Naive thymus-derived CD4-positive, alpha-beta T cell (primary cell): ENCODE measurements at regions of chr4 and their contacts with region 1.

Region 1: DNA sequence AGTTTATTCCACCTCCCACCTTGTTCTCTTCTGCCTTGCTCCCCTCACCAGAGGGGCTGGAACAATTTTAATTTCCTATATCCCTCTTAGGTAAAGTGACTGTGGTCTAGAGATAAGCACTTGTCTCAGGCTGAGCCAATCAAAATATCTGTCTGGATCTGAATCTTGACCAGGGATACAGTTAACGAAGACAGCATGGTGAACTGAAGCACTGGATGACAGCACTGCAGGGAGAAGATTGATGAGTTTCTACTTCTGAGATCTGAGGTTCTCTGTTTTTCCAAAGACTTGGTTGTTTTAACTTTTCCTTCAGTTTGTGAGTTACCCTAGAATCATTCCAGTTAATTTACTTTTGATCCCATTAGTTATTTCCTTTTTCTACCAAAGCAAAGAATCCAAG is 13.2 kb downstream of the GNPDA2 start:
- DNase-seq: no peak
- ATAC-seq: no peak
- H3K4me3 ChIP-seq: no peak overlapping the region
- H3K4me3 Mint-ChIP-seq: no peak overlapping the region
- H3K27ac ChIP-seq: no peak overlapping the region
- H3K27ac Mint-ChIP-seq: peak overlapping the region in 1 of 9 donors; percentile 59
- H3K4me1 ChIP-seq: no peaks in the 10 kb centered on the region
- H3K4me1 Mint-ChIP-seq: peaks cover 0 to 36% (median 5%) of the 10 kb centered on the region in 7 donors
- H3K27me3 ChIP-seq: no peaks in the 10 kb centered on the region
- H3K27me3 Mint-ChIP-seq: no peaks in the 10 kb centered on the region

Region 2: GRCh38 chr4:44532851-44533250 is 180.3 kb before region 1 on chr4:
- CTCF ChIA-PET with region 1: no interaction called
- POLR2A ChIA-PET with region 1: no interaction called
- intact Hi-C with region 1: no loop called
- DNase-seq: no peak
- ATAC-seq: no peak
- H3K4me3 ChIP-seq: no peak overlapping the region
- H3K4me3 Mint-ChIP-seq: no peak overlapping the region
- H3K27ac ChIP-seq: no peak overlapping the region
- H3K27ac Mint-ChIP-seq: no peak overlapping the region
- H3K4me1 ChIP-seq: no peaks in the 10 kb centered on the region
- H3K4me1 Mint-ChIP-seq: no peaks in the 10 kb centered on the region
- H3K27me3 ChIP-seq: no peaks in the 10 kb centered on the region
- H3K27me3 Mint-ChIP-seq: peaks cover 0 to 13% (median 4%) of the 10 kb centered on the region in 5 donors

Region 3: GRCh38 chr4:44726262-44726871 is 13.2 kb after region 1 on chr4 and contains the start of gene GNPDA2:
- CTCF ChIA-PET with region 1: no interaction called
- POLR2A ChIA-PET with region 1: no interaction called
- intact Hi-C with region 1: loop called in 1 of 2 experiments (anchors 1 kb)
- DNase-seq: peak; percentile 68 to 82 (median 81)
- ATAC-seq: peak; percentile 93
- H3K4me3 ChIP-seq: peak within 1 kb of the TSS; percentile 73
- H3K4me3 Mint-ChIP-seq: peak within 1 kb of the TSS; percentile 79 to 97 (median 90)
- H3K27ac ChIP-seq: peak within 1 kb of the TSS; percentile 73
- H3K27ac Mint-ChIP-seq: peak within 1 kb of the TSS; percentile 80 to 95 (median 89)
- H3K4me1 ChIP-seq: peaks cover 13 to 18% of the 10 kb centered on the region in 2 donors
- H3K4me1 Mint-ChIP-seq: peaks cover 23 to 60% (median 51%) of the 10 kb centered on the region in 7 donors
- H3K27me3 ChIP-seq: no peaks in the 10 kb centered on the region
- H3K27me3 Mint-ChIP-seq: peaks cover 0 to 5% (median 0%) of the 10 kb centered on the region in 5 donors
- total RNA-seq, gene GNPDA2: 6.8 to 14.8 (median 12.9) TPM